ENCODE measurements at regions of chr7 and their contacts with region 1.

Region 1: GRCh38 chr7:152076324-152076866 is 50.9 kb downstream of the GALNT11 start:
- DNase-seq: peak; percentile 63 to 67
- H3K4me3 ChIP-seq: no peak overlapping the region
- H3K4me3 Mint-ChIP-seq: no peak overlapping the region
- H3K27ac Mint-ChIP-seq: peak overlapping the region; percentile 56
- H3K4me1 ChIP-seq: peaks cover 49% of the 10 kb centered on the region
- H3K4me1 Mint-ChIP-seq: peaks cover 54% of the 10 kb centered on the region
- H3K27me3 ChIP-seq: no peaks in the 10 kb centered on the region
- H3K27me3 Mint-ChIP-seq: no peaks in the 10 kb centered on the region
- CTCF ChIP-seq: peak; percentile 48 to 64

Region 2: DNA sequence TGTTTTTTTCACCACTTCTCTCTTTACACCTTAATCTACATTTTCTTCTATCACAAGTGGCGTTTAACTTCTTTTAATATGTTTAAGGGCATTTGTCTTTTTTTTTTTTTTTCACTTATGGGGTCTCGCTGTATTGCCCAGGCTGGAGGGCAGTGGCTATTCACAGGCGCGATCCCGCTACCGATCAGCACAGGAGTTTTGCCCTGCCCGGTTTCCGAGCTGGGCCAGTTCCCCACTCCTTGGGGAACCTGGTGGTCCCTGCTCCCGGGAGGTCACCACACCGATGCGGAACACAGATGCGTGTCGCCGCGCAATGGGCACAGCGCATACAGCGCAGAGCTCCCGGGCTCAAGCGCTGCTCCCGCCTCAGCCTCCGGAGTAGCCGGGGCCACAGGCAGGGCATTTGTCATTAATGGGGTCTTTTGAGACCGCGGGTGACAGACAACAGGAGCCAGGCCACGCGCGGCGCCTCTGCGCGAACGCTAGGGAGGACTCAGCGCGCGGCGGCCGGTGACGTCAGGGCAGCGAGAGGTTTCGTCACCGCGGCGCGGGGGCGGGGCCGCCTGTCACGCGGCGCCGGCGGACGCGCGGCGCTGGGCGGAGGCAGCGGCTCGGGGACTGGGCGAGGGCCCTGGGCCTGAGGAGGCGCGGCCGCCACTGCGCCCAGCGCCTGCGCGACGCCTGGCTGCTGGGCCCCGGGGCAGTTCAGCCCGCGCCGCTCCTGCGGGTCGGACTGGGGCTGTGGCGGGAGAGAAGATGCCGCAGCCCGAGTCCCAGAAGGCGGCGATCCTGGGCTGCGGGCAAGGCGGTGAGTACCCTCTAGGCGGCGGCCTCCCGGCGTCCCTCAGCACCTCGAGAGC is 51.1 kb before region 1 on chr7 and contains the start of gene GALNT11:
- CTCF ChIA-PET with region 1: no interaction called
- POLR2A ChIA-PET with region 1: no interaction called
- intact Hi-C with region 1: loop called (anchors 1 kb)
- DNase-seq: peak; percentile 83 to 93
- H3K4me3 ChIP-seq: peak within 1 kb of the TSS; percentile 54
- H3K4me3 Mint-ChIP-seq: peak within 1 kb of the TSS; percentile 80
- H3K27ac Mint-ChIP-seq: peak within 1 kb of the TSS; percentile 80
- H3K4me1 ChIP-seq: no peaks in the 10 kb centered on the region; the same call in 1 of the 2 replicates
- H3K4me1 Mint-ChIP-seq: peaks cover 21% of the 10 kb centered on the region
- H3K27me3 ChIP-seq: no peaks in the 10 kb centered on the region
- H3K27me3 Mint-ChIP-seq: no peaks in the 10 kb centered on the region
- CTCF ChIP-seq: peak; percentile 17 to 47
- total RNA-seq, gene GALNT11: 31.4 and 34.9 TPM in 2 replicates

Region 3: GRCh38 chr7:152052771-152053170 is 23.6 kb before region 1 on chr7:
- CTCF ChIA-PET with region 1: no interaction called
- POLR2A ChIA-PET with region 1: no interaction called
- intact Hi-C with region 1: loop called (anchors 2 kb)
- DNase-seq: no peak
- H3K4me3 ChIP-seq: no peak overlapping the region
- H3K4me3 Mint-ChIP-seq: no peak overlapping the region
- H3K27ac Mint-ChIP-seq: no peak overlapping the region
- H3K4me1 ChIP-seq: peaks cover 25% of the 10 kb centered on the region
- H3K4me1 Mint-ChIP-seq: peaks cover 18% of the 10 kb centered on the region
- H3K27me3 ChIP-seq: no peaks in the 10 kb centered on the region
- H3K27me3 Mint-ChIP-seq: no peaks in the 10 kb centered on the region
- CTCF ChIP-seq: no peak

Region 4: GRCh38 chr7:152108359-152108758 is 32.0 kb after region 1 on chr7:
- CTCF ChIA-PET with region 1: no interaction called
- POLR2A ChIA-PET with region 1: no interaction called
- intact Hi-C with region 1: loop called (anchors 2 kb)
- DNase-seq: peak; percentile 57 to 61
- H3K4me3 ChIP-seq: no peak overlapping the region
- H3K4me3 Mint-ChIP-seq: no peak overlapping the region
- H3K27ac Mint-ChIP-seq: no peak overlapping the region
- H3K4me1 ChIP-seq: no peaks in the 10 kb centered on the region
- H3K4me1 Mint-ChIP-seq: peaks cover 16% of the 10 kb centered on the region
- H3K27me3 ChIP-seq: no peaks in the 10 kb centered on the region
- H3K27me3 Mint-ChIP-seq: no peaks in the 10 kb centered on the region
- CTCF ChIP-seq: peak in 1 of 2 experiments; percentile 37

Region 5: GRCh38 chr7:152180587-152180986 is 104.2 kb after region 1 on chr7:
- CTCF ChIA-PET with region 1: no interaction called
- POLR2A ChIA-PET with region 1: no interaction called
- intact Hi-C with region 1: no loop called
- DNase-seq: no peak
- H3K4me3 ChIP-seq: no peak overlapping the region
- H3K4me3 Mint-ChIP-seq: no peak overlapping the region
- H3K27ac Mint-ChIP-seq: no peak overlapping the region
- H3K4me1 ChIP-seq: no peaks in the 10 kb centered on the region
- H3K4me1 Mint-ChIP-seq: no peaks in the 10 kb centered on the region
- H3K27me3 ChIP-seq: no peaks in the 10 kb centered on the region
- H3K27me3 Mint-ChIP-seq: no peaks in the 10 kb centered on the region
- CTCF ChIP-seq: no peak

Measured in Caco-2 (cell line).